Activated B cell treated with CpG ODN at 0.5 μM for 24 hours (primary cell): ENCODE measurements at regions of chr2 and their contacts with region 1.

Region 1: GRCh38 chr2:47386551-47386950 is 16.4 kb upstream of the MSH2 start:
- DNase-seq: no peak
- ATAC-seq: no peak
- H3K4me3 Mint-ChIP-seq: no peak overlapping the region
- H3K27ac Mint-ChIP-seq: no peak overlapping the region
- H3K4me1 Mint-ChIP-seq: no peaks in the 10 kb centered on the region
- H3K27me3 Mint-ChIP-seq: no peaks in the 10 kb centered on the region
- CTCF ChIP-seq: no peak

Region 2: GRCh38 chr2:47334356-47335136 is 52.0 kb before region 1 on chr2:
- CTCF ChIA-PET with region 1: interaction called, 99 read pairs
- POLR2A ChIA-PET with region 1: interaction called, 12 read pairs
- intact Hi-C with region 1: loop called (anchors 1 kb)
- DNase-seq: no peak
- ATAC-seq: no peak
- H3K4me3 Mint-ChIP-seq: no peak overlapping the region
- H3K27ac Mint-ChIP-seq: no peak overlapping the region
- H3K4me1 Mint-ChIP-seq: peaks cover 22% of the 10 kb centered on the region
- H3K27me3 Mint-ChIP-seq: no peaks in the 10 kb centered on the region
- CTCF ChIP-seq: no peak

Region 3: GRCh38 chr2:47339745-47340541 is 46.6 kb before region 1 on chr2:
- CTCF ChIA-PET with region 1: interaction called, 99 read pairs
- POLR2A ChIA-PET with region 1: interaction called, 12 read pairs
- intact Hi-C with region 1: loop called (anchors 1 kb)
- DNase-seq: no peak
- ATAC-seq: peak; percentile 30
- H3K4me3 Mint-ChIP-seq: no peak overlapping the region
- H3K27ac Mint-ChIP-seq: no peak overlapping the region
- H3K4me1 Mint-ChIP-seq: peaks cover 30% of the 10 kb centered on the region
- H3K27me3 Mint-ChIP-seq: peaks cover 7% of the 10 kb centered on the region
- CTCF ChIP-seq: no peak